Calu3 (cell line): ENCODE measurements at regions of chr15 and their contacts with region 1.

Region 1: GRCh38 chr15:68875377-68876116 is 54.8 kb upstream of the SPESP1 start:
- DNase-seq: peak; percentile 94
- H3K4me3 Mint-ChIP-seq: peak overlapping the region; percentile 61
- H3K27ac Mint-ChIP-seq: peak overlapping the region; percentile 15
- H3K4me1 Mint-ChIP-seq: no peaks in the 10 kb centered on the region
- H3K27me3 Mint-ChIP-seq: peaks cover 57% of the 10 kb centered on the region
- CTCF ChIP-seq: peak; percentile 90

Region 2: GRCh38 chr15:68550481-68551295 is 324.9 kb before region 1 on chr15:
- CTCF ChIA-PET with region 1: interaction called, 21 read pairs
- intact Hi-C with region 1: loop called (anchors 2 kb)
- DNase-seq: peak; percentile 85
- H3K4me3 Mint-ChIP-seq: no peak overlapping the region
- H3K27ac Mint-ChIP-seq: no peak overlapping the region
- H3K4me1 Mint-ChIP-seq: no peaks in the 10 kb centered on the region
- H3K27me3 Mint-ChIP-seq: peaks cover 72% of the 10 kb centered on the region
- CTCF ChIP-seq: peak; percentile 95

Region 3: GRCh38 chr15:68559345-68560310 is 315.9 kb before region 1 on chr15:
- CTCF ChIA-PET with region 1: interaction called, 21 read pairs
- intact Hi-C with region 1: loop called (anchors 2 kb)
- DNase-seq: peak; percentile 90
- H3K4me3 Mint-ChIP-seq: peak overlapping the region; percentile 78
- H3K27ac Mint-ChIP-seq: no peak overlapping the region
- H3K4me1 Mint-ChIP-seq: peaks cover 23% of the 10 kb centered on the region
- H3K27me3 Mint-ChIP-seq: peaks cover 90% of the 10 kb centered on the region
- CTCF ChIP-seq: peak; percentile 91

Region 4: DNA sequence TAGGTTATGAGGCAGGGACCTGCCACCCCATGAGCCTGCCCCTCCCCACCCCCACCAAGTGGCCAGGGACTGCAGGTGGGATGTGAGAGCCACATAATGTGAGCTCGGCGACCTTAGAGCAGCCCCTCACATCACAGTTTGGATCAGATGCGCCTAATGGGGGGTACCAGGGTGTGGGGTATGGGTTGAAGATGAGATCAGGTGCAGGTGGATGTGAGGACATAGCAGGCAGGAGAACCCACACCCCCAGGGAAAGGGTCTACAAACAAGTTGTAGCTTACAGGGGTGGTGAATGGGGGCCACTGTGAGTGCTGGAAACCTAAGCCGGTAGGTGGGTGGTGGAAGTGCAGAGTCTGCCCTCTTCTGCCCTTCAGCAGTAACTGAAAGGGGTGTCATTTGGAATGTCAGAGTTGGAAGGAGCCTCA is 202.8 kb before region 1 on chr15:
- CTCF ChIA-PET with region 1: interaction called, 11 read pairs
- intact Hi-C with region 1: loop called (anchors 2 kb)
- DNase-seq: no peak
- H3K4me3 Mint-ChIP-seq: no peak overlapping the region
- H3K27ac Mint-ChIP-seq: no peak overlapping the region
- H3K4me1 Mint-ChIP-seq: peaks cover 9% of the 10 kb centered on the region
- H3K27me3 Mint-ChIP-seq: peaks cover 80% of the 10 kb centered on the region
- CTCF ChIP-seq: peak; percentile 21

Region 5: GRCh38 chr15:68730471-68730919 is 145.1 kb before region 1 on chr15:
- CTCF ChIA-PET with region 1: interaction called, 21 read pairs
- intact Hi-C with region 1: loop called (anchors 1 kb)
- DNase-seq: peak; percentile 30
- H3K4me3 Mint-ChIP-seq: no peak overlapping the region
- H3K27ac Mint-ChIP-seq: no peak overlapping the region
- H3K4me1 Mint-ChIP-seq: no peaks in the 10 kb centered on the region
- H3K27me3 Mint-ChIP-seq: peaks cover 49% of the 10 kb centered on the region
- CTCF ChIP-seq: peak; percentile 39

Region 6: GRCh38 chr15:68783226-68784058 is 92.1 kb before region 1 on chr15:
- CTCF ChIA-PET with region 1: interaction called, 30 read pairs
- intact Hi-C with region 1: loop called (anchors 2 kb)
- DNase-seq: peak; percentile 73
- H3K4me3 Mint-ChIP-seq: no peak overlapping the region
- H3K27ac Mint-ChIP-seq: peak overlapping the region; percentile 54
- H3K4me1 Mint-ChIP-seq: no peaks in the 10 kb centered on the region
- H3K27me3 Mint-ChIP-seq: no peaks in the 10 kb centered on the region
- CTCF ChIP-seq: peak; percentile 81

Region 7: DNA sequence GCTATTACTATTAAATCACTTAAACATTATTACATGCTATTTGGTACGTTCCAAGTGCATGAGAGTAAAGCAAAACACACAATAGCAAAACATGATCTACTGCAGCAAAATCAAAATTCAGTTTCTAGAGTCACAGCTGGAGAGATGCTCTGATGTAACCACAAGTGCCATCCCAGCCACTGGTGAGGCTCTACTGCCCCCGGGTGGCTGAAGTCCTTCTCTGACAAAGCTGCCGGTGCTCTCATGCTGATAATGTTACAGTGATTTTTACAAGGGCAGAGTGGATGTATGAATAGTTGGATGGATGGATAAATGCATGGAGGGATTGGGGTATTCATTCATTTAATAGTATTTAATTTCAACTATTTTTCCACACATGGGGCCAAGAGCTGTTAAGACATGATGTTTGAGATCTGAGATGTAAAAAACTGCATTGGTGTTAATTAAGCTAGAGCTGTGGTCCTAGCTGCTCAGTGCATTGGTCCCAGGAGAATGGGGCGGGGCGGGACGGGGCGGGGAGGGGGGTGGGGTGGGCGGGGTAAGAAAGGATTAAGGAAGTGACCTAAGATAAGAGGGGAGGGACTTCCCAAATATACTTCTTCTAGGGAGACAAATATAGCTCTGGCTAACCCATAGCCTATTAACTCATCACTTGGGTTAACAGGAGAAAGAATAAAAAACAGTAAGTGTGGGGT is 49.5 kb after region 1 on chr15:
- CTCF ChIA-PET with region 1: interaction called, 34 read pairs
- intact Hi-C with region 1: no loop called
- DNase-seq: peak; percentile 87
- H3K4me3 Mint-ChIP-seq: no peak overlapping the region
- H3K27ac Mint-ChIP-seq: no peak overlapping the region
- H3K4me1 Mint-ChIP-seq: no peaks in the 10 kb centered on the region
- H3K27me3 Mint-ChIP-seq: peaks cover 60% of the 10 kb centered on the region
- CTCF ChIP-seq: peak; percentile 90

Region 8: DNA sequence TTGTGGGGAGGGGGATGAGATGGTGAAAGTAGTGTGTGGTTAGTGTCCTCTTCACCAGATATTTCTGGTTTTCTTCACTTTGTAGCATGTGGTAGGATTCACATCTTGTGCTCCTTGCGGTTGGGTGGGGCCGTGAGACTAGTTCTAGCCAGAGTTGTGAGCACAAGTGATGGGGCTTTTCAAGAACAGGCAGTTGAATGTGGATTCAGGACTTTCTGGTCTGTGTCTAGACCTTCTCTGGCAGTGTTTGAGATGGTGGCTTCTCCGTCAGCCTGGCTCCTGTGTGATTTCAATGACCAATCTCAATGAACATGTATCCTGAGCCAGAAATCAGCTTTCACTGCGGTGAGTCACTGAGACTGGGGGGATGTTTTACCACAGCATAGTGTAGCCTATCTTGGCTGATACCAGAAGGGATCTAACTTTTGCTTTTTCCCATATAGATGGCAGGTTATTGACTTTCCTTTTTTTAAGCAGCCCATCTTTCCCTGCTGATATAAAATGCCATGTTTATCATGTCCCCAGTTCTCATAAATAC is 659.6 kb after region 1 on chr15:
- CTCF ChIA-PET with region 1: no interaction called
- intact Hi-C with region 1: no loop called
- DNase-seq: no peak
- H3K4me3 Mint-ChIP-seq: no peak overlapping the region
- H3K27ac Mint-ChIP-seq: no peak overlapping the region
- H3K4me1 Mint-ChIP-seq: no peaks in the 10 kb centered on the region
- H3K27me3 Mint-ChIP-seq: peaks cover 24% of the 10 kb centered on the region
- CTCF ChIP-seq: no peak